SK-N-SH (cell line): ENCODE measurements at regions of chr17 and their contacts with region 1.

Region 1: GRCh38 chr17:72985881-72986720 is 106.4 kb downstream of the SLC39A11 start:
- DNase-seq: peak; percentile 85
- H3K4me3 ChIP-seq: no peak overlapping the region; a peak in 1 of 4 replicates
- H3K27ac ChIP-seq: no peak overlapping the region
- H3K4me1 ChIP-seq: peaks cover 5 to 12% of the 10 kb centered on the region in 2 experiments; a peak in 2 of 4 replicates
- H3K27me3 ChIP-seq: no peaks in the 10 kb centered on the region
- CTCF ChIP-seq: peak; percentile 97
- EP300 ChIP-seq: no peak
- RAD21 ChIP-seq: peak; percentile 96

Region 2: GRCh38 chr17:72872396-72872795 is 113.7 kb before region 1 on chr17:
- CTCF ChIA-PET with region 1: no interaction called
- POLR2A ChIA-PET with region 1: no interaction called
- DNase-seq: no peak
- H3K4me3 ChIP-seq: no peak overlapping the region
- H3K27ac ChIP-seq: no peak overlapping the region
- H3K4me1 ChIP-seq: peaks cover 0 to 8% of the 10 kb centered on the region in 2 experiments; a peak in 2 of 4 replicates
- H3K27me3 ChIP-seq: no peaks in the 10 kb centered on the region
- CTCF ChIP-seq: no peak
- EP300 ChIP-seq: no peak
- RAD21 ChIP-seq: no peak

Region 3: GRCh38 chr17:72972263-72972951 is 13.7 kb before region 1 on chr17:
- CTCF ChIA-PET with region 1: interaction called, 13 read pairs
- POLR2A ChIA-PET with region 1: no interaction called
- DNase-seq: no peak
- H3K4me3 ChIP-seq: no peak overlapping the region
- H3K27ac ChIP-seq: no peak overlapping the region
- H3K4me1 ChIP-seq: peaks cover 6 to 19% of the 10 kb centered on the region in 2 experiments; a peak in 3 of 4 replicates
- H3K27me3 ChIP-seq: no peaks in the 10 kb centered on the region
- CTCF ChIP-seq: no peak
- EP300 ChIP-seq: no peak
- RAD21 ChIP-seq: no peak

Region 4: DNA sequence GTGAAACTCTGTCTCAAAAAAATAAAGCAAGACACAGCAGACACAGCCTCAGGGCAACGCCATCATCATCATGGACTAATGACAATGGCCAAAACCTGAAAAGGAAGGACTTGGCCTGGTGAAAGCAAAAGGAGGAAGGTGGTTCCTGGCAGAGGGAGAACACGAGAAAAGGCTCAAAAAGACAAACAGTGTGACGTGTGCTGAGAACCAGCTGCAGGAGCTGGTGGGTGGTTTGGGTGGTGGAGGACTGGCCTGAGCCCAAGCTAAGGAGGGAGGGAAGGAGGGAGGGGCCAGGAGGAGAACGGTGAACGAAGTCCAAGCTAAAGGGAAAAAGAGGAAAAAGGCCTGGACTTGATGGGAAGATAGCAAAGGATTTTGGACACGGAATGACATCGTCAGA is 21.3 kb after region 1 on chr17:
- CTCF ChIA-PET with region 1: interaction called, 12 read pairs
- POLR2A ChIA-PET with region 1: no interaction called
- DNase-seq: no peak
- H3K4me3 ChIP-seq: no peak overlapping the region
- H3K27ac ChIP-seq: no peak overlapping the region
- H3K4me1 ChIP-seq: peaks cover 0 to 6% of the 10 kb centered on the region in 2 experiments; a peak in 1 of 4 replicates
- H3K27me3 ChIP-seq: no peaks in the 10 kb centered on the region
- CTCF ChIP-seq: no peak
- EP300 ChIP-seq: no peak
- RAD21 ChIP-seq: no peak

Region 5: GRCh38 chr17:73103641-73104335 is 117.7 kb after region 1 on chr17:
- CTCF ChIA-PET with region 1: no interaction called
- POLR2A ChIA-PET with region 1: no interaction called
- DNase-seq: no peak
- H3K4me3 ChIP-seq: no peak overlapping the region
- H3K27ac ChIP-seq: no peak overlapping the region
- H3K4me1 ChIP-seq: no peaks in the 10 kb centered on the region
- H3K27me3 ChIP-seq: no peaks in the 10 kb centered on the region
- CTCF ChIP-seq: no peak
- EP300 ChIP-seq: no peak
- RAD21 ChIP-seq: no peak

Region 6: GRCh38 chr17:73156166-73156840 is 170.2 kb after region 1 on chr17:
- CTCF ChIA-PET with region 1: interaction called, 55 read pairs
- POLR2A ChIA-PET with region 1: no interaction called
- DNase-seq: peak; percentile 92
- H3K4me3 ChIP-seq: peak overlapping the region in 1 of 2 experiments; percentile 31; a peak in 2 of 4 replicates
- H3K27ac ChIP-seq: peak overlapping the region in 1 of 2 experiments; percentile 45; a peak in 1 of 4 replicates
- H3K4me1 ChIP-seq: peaks cover 6 to 22% of the 10 kb centered on the region in 2 experiments; a peak in 1 of 4 replicates
- H3K27me3 ChIP-seq: no peaks in the 10 kb centered on the region
- CTCF ChIP-seq: peak; percentile 89
- EP300 ChIP-seq: 0 out of 4 replicates have a peak, but pooled peaks have one; percentile 9 to 24
- RAD21 ChIP-seq: peak; percentile 90